Cardiac septum (tissue), 1 donor: ENCODE measurements at regions of chr6 and their contacts with region 1.

Region 1: DNA sequence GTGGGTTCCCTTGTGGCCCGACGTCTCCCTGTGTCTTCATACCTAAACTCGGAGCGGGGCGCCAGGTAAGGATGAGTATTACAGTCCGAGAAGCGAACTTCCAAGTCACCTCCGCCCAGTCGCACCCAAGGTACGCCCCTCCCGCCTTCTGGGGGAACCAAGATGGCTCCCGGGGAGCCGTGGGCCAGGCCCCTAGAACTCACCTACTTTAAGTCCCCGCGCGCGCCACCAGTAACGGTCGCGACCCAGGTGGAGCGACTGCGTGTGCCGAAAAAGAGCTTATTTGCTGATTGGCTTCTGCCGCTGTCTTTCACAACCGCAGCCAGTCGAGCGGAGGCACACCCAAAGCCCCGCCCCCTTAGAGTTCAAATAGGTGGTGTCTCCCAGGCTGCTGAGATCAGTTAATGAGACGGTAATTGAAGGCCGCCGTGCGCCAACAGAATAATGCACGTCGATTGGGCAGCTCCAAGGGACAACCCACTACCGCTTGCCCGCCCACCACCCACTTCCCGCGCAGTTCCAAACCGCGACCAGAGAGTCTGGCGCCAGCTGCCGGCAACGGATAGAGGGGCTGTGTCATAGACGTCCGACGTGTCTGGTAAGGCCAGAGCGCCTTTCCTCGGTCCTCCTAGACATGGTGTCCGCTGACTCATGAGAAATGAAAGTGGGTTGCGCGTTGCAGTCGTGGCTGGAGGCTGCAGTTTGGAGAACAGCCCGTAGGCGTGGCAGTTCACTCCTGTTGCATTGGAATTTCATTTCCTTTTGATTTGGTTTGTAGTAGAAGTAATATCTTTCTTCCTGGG is at the start of gene MDC1:
- DNase-seq: peak; percentile 100
- total RNA-seq, gene MDC1: 23.1 TPM

Region 2: DNA sequence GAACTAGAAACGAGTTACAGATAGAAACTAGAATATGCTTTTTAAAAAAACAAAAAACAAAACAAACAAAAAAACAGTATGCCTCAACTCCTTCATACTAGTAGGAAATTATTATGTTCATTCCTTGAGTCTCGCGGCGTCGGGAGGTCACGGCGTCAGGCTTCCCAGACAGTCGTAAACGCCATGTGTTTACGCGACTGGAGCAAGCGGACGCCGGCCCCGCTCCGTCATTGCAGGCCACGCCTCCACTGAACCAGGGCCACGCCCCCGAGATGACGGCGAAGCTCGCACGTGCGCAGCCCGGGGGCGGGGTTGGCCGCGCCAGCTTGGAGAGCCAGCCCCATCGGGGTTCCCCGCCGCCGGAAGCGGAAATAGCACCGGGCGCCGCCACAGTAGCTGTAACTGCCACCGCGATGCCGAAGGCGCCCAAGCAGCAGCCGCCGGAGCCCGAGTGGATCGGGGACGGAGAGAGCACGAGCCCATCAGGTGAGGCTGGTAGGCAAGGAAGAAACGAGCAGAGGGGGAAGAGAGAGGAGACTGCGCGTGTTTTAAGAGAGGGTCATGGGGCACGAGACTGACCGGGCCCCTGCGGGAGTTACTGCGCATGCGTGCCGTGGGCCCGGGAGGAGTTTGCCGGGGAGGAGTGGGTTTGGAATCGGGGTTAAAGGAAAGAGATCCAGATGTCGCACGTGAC is 146.0 kb before region 1 on chr6 and contains the start of gene ABCF1:
- intact Hi-C with region 1: loop called (anchors 5 kb)
- DNase-seq: peak; percentile 100
- total RNA-seq, gene ABCF1: 44.2 TPM

Region 3: DNA sequence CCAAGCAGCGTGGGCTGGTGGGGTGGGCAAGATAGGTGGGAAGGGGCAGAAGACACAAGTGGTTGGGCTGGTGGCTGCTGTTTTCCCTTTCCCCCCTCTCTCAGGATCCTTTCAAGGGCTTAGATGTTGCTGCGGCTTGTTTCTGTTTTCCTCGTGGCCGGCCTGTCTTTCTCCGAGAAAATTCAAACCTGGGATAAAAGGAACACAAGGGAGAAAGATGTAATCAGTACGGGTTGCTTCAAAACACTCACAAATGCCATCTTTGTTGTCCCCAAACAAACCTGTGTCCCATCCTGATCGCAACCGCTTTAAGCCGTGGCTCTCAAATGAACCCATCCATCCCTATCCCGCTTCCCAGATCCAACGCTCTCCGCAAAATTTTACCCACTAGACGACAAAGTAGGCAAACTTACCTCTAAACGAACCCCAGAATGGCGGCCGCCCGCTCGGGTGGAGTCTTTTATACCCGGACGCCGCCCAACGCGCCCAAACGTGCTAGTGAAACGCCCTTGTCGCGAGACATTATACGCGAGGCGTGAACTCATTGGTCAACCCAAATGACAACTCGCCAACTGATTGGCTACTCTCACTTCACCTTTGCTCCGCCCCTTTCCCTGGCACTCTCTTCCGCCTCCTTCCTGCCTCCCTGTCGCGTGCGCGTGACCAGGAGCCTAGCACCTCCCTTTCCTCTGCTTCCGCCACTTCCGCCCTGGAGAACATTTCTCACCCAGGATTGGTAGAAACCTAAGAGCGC is 100.3 kb before region 1 on chr6 and contains the start of gene PPP1R10:
- intact Hi-C with region 1: loop called (anchors 1 kb)
- DNase-seq: peak; percentile 99
- total RNA-seq, gene PPP1R10: 30.0 TPM

Region 4: DNA sequence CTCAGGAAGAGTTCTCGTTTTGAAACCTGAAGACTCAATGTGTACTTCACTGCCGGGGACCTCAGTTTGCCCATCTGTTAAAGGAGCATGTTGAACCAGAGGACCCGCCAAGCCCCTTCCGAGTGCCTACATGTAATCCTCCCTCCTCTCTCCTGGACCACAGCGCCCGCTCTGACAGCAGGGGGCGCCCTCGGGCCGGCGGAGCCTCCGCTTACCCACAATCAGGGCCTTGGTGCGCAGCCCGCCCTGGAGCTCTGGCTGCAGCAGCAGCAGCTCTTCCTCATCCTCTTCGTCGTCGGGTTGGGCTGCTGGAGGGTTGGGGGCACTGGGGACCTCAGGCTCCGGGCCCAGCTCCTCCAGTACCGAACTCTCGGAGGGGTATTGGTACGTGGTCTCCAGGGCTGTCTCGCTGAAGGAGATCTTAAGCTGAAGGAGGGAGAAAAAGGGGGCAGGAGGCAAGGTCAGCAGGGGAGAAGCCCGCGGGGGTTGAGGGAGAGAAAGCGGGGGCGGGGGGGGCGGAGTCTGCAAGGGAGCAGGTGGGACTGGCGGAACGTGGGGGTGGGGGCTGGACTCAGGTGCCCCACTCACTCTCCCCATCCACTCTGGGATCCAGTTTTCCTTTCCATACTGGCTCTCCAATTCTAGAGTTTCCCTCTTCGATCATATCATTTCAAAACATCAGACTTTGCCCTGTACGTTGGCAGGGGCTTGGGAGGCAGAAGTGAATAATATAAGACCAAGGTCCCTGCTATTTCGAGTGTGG is 38.1 kb before region 1 on chr6:
- intact Hi-C with region 1: loop called (anchors 1 kb)
- DNase-seq: peak; percentile 96

Region 5: DNA sequence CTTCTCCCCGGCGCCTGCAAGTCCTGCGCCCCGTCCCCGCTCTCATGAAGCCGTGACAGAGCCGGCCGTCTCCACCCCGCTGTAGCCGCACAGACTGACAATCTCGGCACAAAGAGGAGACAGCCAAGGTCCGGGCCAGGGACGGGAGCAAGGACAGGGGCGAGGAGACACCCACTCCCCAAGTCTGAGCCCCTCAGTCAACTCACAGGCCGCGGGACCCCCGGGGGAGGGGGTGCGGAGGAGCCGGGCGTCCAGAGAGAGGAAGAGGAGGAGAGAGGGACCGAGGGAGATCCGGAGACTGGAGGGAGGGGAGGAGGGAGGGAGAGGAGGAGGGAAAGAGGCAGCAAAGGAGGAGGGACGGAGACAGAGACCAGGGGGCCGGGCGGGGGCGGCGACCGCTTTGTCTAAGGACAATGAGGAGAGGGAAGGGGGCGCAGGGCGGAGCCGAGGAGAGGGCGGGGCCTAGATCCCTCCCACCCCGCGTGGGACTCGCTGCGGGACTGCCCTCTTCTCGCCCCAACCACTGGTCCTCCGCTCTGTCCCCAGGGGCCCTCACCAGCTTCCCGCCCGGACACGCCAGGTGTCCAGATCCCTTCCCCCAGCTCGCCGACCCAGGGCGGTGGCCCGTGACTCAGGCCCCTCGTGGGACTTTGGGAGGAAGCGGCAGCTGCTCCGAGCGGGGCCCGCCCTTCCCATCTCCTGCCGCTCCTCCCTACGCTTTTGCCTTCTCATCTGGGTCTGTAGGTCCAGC is 30.2 kb before region 1 on chr6:
- intact Hi-C with region 1: loop called (anchors 1 kb)
- DNase-seq: peak; percentile 99

Region 6: GRCh38 chr6:30742316-30743098 is 25.3 kb after region 1 on chr6 and contains the start of gene FLOT1:
- intact Hi-C with region 1: loop called (anchors 2 kb)
- DNase-seq: peak; percentile 99
- total RNA-seq, gene FLOT1: 251 TPM

Region 7: DNA sequence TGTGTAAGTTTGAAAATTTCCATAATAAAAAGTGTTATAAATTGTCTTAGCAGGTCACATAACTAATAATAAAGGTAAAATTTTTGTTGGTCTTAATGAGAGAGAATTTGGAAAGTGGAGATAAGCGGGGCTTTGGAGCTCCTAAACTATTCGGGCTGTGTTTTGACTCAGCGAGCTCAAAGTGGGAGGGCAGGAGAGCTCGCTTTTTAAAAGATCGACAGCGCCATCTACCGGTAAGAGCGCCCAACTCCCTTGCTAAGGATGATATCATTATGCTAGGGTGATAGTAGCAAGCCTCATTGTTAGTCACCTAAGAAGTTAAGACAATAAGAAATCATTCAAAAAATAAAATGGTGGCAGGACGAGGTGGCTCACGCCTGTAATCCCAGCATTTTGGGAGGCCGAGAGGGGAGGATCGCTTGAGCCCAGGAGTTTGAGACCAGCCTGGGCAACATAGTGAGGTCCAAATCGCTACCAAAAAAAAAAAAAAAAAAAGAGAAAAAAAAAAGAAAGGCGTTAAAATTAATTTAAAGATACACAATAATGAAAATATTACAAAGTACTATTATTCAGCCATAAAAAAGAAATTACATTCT is 370.3 kb after region 1 on chr6:
- intact Hi-C with region 1: loop called (anchors 10 kb)
- DNase-seq: peak; percentile 90